ENCODE measurements at regions of chr1 and their contacts with region 1.

Region 1: GRCh38 chr1:165476776-165477175 is 31.9 kb upstream of the RXRG start:
- DNase-seq: no peak
- H3K4me3 ChIP-seq: no peak overlapping the region
- CTCF ChIP-seq: no peak
- POLR2A ChIP-seq: no peak

Region 2: DNA sequence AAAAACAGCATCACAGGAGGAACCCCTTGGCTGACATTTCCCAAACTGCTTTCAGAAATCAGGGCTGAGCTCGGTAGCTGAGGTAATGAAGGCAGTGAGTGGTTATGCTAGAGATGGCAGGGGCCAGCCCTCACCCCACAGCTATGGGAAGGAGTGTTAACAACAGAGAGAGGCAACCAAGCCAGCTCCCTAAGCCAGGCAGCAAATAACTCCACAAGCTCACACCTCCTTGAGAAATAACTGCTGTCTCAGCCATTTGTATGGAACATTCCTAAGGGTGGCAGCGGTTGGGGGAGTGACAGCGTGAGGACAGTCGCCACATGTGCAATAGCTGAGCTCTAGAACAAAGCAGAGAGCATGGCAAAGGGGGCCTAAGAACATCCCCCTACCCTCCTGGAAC is 162.9 kb before region 1 on chr1:
- intact Hi-C with region 1: no loop called
- DNase-seq: no peak
- H3K4me3 ChIP-seq: no peak overlapping the region
- CTCF ChIP-seq: no peak
- POLR2A ChIP-seq: no peak

Region 3: GRCh38 chr1:165383067-165383466 is 93.7 kb before region 1 on chr1:
- intact Hi-C with region 1: no loop called
- DNase-seq: peak; percentile 55 to 88
- H3K4me3 ChIP-seq: no peak overlapping the region
- CTCF ChIP-seq: no peak
- POLR2A ChIP-seq: no peak

Region 4: DNA sequence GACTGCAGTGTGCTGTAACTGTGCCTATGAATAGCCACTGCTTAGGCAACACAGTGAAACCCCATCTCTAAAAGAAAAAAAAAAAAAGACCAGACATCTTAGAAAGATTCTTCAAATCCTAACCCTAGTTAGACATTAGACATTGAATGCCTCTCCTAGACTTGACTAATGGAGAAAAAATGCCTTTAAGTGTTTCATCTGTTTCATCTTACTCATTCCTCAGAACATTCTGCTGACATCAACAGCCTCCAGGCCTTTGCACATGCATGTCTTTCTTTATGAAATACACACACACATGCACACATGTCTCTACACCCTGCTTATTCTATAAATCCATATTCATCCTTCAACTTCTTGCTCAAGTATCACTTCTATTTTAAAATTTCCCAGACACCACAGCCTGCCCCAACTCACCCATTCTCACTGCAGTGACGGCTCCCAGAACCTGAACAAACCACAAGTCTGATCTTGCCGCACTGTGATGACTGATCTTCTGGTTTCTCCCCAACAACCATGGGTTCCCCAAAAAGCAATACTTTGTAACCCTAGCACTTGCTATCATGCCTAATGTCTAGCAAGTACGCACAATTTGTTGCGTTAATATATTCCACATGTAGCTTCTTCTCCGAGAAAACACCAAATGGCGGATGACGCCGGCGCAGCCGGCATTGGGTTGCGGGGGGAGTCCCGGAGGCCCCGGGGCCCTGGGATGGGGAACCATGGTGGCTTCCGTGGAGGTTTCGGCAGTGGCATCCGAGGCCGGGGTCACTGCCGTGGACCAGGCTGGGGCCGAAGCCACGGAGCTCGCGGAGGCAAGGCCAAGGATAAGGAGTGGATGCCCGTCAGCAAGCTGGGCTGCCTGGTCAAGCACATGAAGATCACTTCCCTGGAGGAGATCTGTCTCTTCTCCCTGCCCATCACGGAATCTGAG is 104.4 kb after region 1 on chr1:
- intact Hi-C with region 1: loop called (anchors 10 kb)
- DNase-seq: no peak
- H3K4me3 ChIP-seq: no peak overlapping the region
- CTCF ChIP-seq: no peak
- POLR2A ChIP-seq: no peak

Region 5: DNA sequence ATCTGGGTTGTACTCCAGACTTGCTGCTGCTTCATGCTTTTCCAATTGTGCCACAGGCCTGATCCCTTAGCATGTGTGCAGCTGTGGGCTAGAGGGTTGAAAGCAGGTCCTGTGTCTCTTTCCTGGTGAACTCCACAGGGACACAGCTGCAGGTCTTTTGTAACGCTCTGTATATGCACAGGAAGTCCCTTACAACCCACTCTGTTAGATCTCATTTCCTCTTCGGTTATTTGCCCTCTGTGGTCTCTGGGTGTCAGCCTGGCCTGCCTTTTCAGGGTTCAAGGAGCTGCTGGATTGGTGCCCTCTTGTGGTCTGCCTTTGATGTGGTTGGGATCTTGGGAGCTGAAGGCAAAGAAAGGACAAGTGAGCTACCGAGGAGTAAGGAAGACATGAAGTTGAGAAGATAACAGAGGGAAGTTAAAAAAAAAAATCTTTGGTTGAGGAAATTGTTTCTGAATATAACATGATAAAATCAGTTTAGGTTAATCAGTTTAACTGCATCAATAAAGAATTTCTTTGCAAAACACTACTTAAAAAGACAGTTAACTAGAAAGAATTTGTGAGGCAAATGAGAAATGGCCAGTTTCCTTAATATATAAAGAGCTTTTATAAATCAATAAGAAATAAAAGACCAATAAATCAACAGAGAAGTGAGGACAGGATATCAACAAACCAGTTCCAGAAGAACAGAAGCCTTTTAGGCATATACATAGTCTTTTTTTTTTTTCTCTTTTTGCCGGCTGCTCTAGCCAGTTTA is 394.7 kb after region 1 on chr1:
- intact Hi-C with region 1: no loop called
- DNase-seq: no peak
- H3K4me3 ChIP-seq: no peak overlapping the region
- CTCF ChIP-seq: no peak
- POLR2A ChIP-seq: no peak

Measured in lower leg skin (tissue), 4 donors.